A549 (cell line): ENCODE measurements at regions of chr2 and their contacts with region 1.

Region 1: GRCh38 chr2:85888684-85889626 is at the start of gene ST3GAL5:
- DNase-seq: peak; percentile 81 to 92
- ATAC-seq: peak; percentile 74 to 84
- H3K4me3 ChIP-seq: peak within 1 kb of the TSS; percentile 77
- H3K27ac ChIP-seq: peak within 1 kb of the TSS; percentile 88 to 97
- H3K4me1 ChIP-seq: peaks cover 67% of the 10 kb centered on the region
- CTCF ChIP-seq: peak; percentile 97
- EP300 ChIP-seq: peak in 1 of 2 experiments; percentile 28; a peak in 1 of 5 replicates
- POLR2A ChIP-seq: peak; percentile 22
- RAD21 ChIP-seq: peak; percentile 55 to 81
- polyA plus RNA-seq, gene ST3GAL5: 115 and 119 TPM in 2 replicates

Region 2: GRCh38 chr2:85858841-85859240 is 30.1 kb before region 1 on chr2:
- CTCF ChIA-PET with region 1: interaction called, 17 read pairs
- POLR2A ChIA-PET with region 1: no interaction called
- DNase-seq: no peak
- ATAC-seq: no peak; a peak in 1 of 6 replicates
- H3K4me3 ChIP-seq: no peak overlapping the region
- H3K27ac ChIP-seq: no peak overlapping the region
- H3K4me1 ChIP-seq: no peaks in the 10 kb centered on the region
- CTCF ChIP-seq: no peak
- EP300 ChIP-seq: no peak
- POLR2A ChIP-seq: no peak
- RAD21 ChIP-seq: no peak

Region 3: GRCh38 chr2:85920810-85921545 is 32.0 kb after region 1 on chr2:
- CTCF ChIA-PET with region 1: interaction called, 95 read pairs
- POLR2A ChIA-PET with region 1: interaction called, 3 read pairs
- DNase-seq: peak; percentile 43 to 56
- ATAC-seq: peak; percentile 61 to 74
- H3K4me3 ChIP-seq: no peak overlapping the region
- H3K27ac ChIP-seq: peak overlapping the region; percentile 76 to 77
- H3K4me1 ChIP-seq: peaks cover 53% of the 10 kb centered on the region
- CTCF ChIP-seq: no peak
- EP300 ChIP-seq: peak in 1 of 2 experiments; percentile 38; a peak in 1 of 5 replicates
- POLR2A ChIP-seq: no peak
- RAD21 ChIP-seq: peak in 1 of 2 experiments; percentile 25; a peak in 2 of 5 replicates

Region 4: DNA sequence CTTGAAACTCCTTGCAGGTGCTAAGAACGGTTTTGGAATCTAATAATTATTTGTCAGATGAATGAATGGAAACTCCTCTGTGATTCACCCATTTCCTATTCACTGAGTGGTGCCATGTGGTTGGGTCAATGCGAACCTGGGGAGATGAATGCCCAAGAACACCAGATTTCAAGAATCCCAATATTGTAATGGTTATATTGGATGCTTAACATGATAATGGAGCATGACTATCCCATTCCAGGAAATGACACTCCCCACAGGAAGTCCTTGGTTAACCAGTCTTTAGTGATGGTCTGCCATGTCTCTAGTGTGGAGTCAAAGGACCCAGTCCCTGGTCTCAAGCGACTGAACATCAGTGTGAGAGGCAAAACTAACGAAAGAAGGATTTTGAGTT is 67.7 kb after region 1 on chr2:
- CTCF ChIA-PET with region 1: interaction called, 30 read pairs
- POLR2A ChIA-PET with region 1: no interaction called
- DNase-seq: no peak
- ATAC-seq: no peak
- H3K4me3 ChIP-seq: no peak overlapping the region
- H3K27ac ChIP-seq: peak overlapping the region in 1 of 2 experiments; percentile 76; a peak in 3 of 6 replicates
- H3K4me1 ChIP-seq: peaks cover 53% of the 10 kb centered on the region
- CTCF ChIP-seq: no peak
- EP300 ChIP-seq: no peak
- POLR2A ChIP-seq: no peak
- RAD21 ChIP-seq: no peak

Region 5: GRCh38 chr2:86020984-86021383 is 132.0 kb after region 1 on chr2:
- CTCF ChIA-PET with region 1: interaction called, 40 read pairs
- POLR2A ChIA-PET with region 1: interaction called, 3 read pairs
- DNase-seq: no peak
- ATAC-seq: peak; percentile 8 to 11; a peak in 3 of 6 replicates
- H3K4me3 ChIP-seq: no peak overlapping the region
- H3K27ac ChIP-seq: peak overlapping the region in 1 of 2 experiments; percentile 30; a peak in 1 of 6 replicates
- H3K4me1 ChIP-seq: peaks cover 15% of the 10 kb centered on the region; the same call in 2 of the 3 replicates
- CTCF ChIP-seq: no peak
- EP300 ChIP-seq: no peak
- POLR2A ChIP-seq: no peak
- RAD21 ChIP-seq: no peak

Region 6: DNA sequence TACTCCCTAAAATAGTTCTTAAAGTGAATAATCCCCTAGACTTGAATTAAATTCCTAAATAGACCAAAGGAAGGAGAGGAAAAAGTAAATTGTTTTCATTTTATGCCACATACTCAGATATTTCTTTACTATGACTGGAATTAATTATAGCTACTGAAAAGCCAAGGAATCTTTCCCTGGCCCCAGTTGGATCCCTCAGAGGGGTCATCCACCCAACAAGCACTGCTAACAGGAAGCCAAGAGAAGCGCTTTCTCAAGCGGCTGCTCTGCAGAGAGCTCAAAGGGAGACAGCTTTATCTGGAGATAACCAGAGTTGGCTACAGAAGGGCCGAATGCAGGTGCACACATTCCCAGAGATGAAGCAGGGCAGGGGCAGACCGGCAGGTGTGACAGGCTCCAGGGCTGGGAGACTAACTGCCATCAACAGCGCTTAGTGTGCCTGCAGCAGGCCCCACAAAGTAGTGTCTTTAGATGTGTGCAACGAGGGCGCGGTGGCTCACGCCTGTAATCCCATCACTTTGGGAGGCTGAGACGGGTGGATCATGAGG is 165.7 kb after region 1 on chr2:
- CTCF ChIA-PET with region 1: interaction called, 36 read pairs
- POLR2A ChIA-PET with region 1: no interaction called
- DNase-seq: no peak
- ATAC-seq: no peak
- H3K4me3 ChIP-seq: no peak overlapping the region
- H3K27ac ChIP-seq: no peak overlapping the region
- H3K4me1 ChIP-seq: no peaks in the 10 kb centered on the region
- CTCF ChIP-seq: no peak
- EP300 ChIP-seq: no peak
- POLR2A ChIP-seq: no peak
- RAD21 ChIP-seq: no peak